MCF 10A (cell line): ENCODE measurements at regions of chr3 and their contacts with region 1.

Region 1: GRCh38 chr3:104460477-104461406 is 906.0 kb upstream of the ALCAM start:
- DNase-seq: peak; percentile 20
- H3K4me3 Mint-ChIP-seq: no peak overlapping the region
- H3K27ac Mint-ChIP-seq: no peak overlapping the region
- H3K4me1 Mint-ChIP-seq: no peaks in the 10 kb centered on the region
- H3K27me3 Mint-ChIP-seq: no peaks in the 10 kb centered on the region
- CTCF ChIP-seq: peak; percentile 28

Region 2: DNA sequence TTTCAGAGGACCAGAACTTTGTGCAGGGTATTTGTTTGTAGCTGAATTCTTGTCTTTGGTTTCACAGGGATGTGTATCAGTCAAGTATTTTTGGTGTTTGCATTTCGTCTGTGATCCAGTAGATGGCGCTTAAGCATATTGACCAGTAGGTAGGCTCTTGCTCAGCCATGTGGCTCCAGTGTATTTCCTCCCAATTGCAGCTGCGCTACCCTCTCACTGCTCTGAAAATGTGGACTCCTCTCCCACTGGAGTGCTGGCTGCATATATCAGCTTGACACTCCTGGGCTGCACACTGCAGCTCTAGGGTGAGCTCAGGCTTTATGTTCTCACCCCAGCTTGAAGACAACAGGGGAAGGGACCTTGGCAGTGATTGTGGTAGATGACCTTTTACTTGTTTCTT is 358.4 kb before region 1 on chr3:
- CTCF ChIA-PET with region 1: interaction called, 10 read pairs
- POLR2A ChIA-PET with region 1: no interaction called
- intact Hi-C with region 1: no loop called
- DNase-seq: peak; percentile 64
- H3K4me3 Mint-ChIP-seq: no peak overlapping the region
- H3K27ac Mint-ChIP-seq: no peak overlapping the region
- H3K4me1 Mint-ChIP-seq: peaks cover 13% of the 10 kb centered on the region
- H3K27me3 Mint-ChIP-seq: no peaks in the 10 kb centered on the region
- CTCF ChIP-seq: peak; percentile 75

Region 3: GRCh38 chr3:104273046-104273649 is 187.6 kb before region 1 on chr3:
- CTCF ChIA-PET with region 1: interaction called, 10 read pairs
- POLR2A ChIA-PET with region 1: no interaction called
- intact Hi-C with region 1: loop called (anchors 1 kb)
- DNase-seq: peak; percentile 40
- H3K4me3 Mint-ChIP-seq: no peak overlapping the region
- H3K27ac Mint-ChIP-seq: no peak overlapping the region
- H3K4me1 Mint-ChIP-seq: no peaks in the 10 kb centered on the region
- H3K27me3 Mint-ChIP-seq: no peaks in the 10 kb centered on the region
- CTCF ChIP-seq: peak; percentile 50